ENCODE measurements at regions of chr7 and their contacts with region 1.

Region 1: DNA sequence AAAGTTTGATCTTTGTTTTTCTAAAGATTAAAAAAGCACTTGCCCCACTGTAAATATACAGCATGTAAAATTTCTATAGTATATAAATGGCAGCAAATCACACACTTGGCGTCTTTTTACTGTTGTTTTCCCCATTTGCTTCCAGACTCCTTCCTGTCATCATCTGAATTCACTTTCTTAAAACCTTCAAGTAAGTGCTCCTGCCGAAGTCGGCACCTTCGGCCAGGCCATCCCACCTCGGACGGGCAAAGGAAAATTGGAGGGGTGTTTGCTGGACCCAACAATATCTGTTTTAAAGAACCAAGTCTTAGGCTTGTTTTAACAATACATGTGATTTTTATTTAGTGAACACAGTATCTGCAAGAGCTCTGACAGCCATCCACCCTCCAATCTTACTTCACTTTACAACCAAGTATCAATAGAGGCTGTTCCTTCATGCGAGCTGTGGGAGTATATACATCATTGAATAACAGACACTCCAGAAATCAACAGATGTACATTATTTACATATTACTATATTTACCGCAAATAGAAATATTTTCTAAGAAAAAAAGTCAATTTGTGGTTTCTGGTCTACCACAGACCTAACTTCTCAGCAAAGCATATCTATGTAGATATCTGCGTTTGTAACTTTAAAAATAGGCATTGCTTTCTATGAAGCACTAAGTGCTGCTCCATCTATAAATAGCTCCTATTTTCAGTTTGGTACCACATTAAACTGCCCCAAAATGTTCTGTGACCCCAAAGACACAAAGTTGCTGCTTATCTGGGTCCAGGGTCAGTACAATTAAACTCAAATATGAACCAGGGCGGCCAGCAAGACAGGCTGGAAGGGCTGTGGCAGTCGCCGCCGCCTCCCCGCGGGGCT is 110.7 kb downstream of the CYTH3 start:
- DNase-seq: no peak
- H3K4me3 ChIP-seq: no peak overlapping the region
- H3K27ac ChIP-seq: no peak overlapping the region
- H3K4me1 ChIP-seq: no peaks in the 10 kb centered on the region
- H3K27me3 ChIP-seq: no peaks in the 10 kb centered on the region
- CTCF ChIP-seq: no peak
- POLR2A ChIP-seq: no peak

Region 2: DNA sequence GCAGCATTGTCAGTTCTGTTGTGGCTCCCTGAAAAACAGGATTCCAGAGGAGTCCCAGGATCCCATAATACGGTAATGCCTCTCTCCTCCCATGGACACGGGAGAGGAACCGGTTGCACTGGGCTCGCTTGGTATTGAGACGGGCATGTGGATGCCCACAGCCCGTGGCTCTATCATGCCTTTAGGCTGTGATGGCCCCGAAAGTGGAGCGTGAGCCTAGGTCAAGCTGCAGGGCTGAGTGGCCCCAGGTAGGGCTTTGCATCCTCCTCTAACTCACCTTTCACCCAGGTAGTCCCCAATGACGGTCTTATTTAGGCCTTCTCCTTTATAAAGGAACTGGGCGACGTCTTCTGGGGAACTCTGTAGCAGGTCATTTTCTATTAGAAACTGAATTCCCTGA is 15.8 kb after region 1 on chr7:
- intact Hi-C with region 1: loop called (anchors 1 kb)
- DNase-seq: no peak
- H3K4me3 ChIP-seq: no peak overlapping the region
- H3K27ac ChIP-seq: no peak overlapping the region
- H3K4me1 ChIP-seq: peaks cover 8% of the 10 kb centered on the region
- H3K27me3 ChIP-seq: no peaks in the 10 kb centered on the region
- CTCF ChIP-seq: no peak
- POLR2A ChIP-seq: no peak

Region 3: DNA sequence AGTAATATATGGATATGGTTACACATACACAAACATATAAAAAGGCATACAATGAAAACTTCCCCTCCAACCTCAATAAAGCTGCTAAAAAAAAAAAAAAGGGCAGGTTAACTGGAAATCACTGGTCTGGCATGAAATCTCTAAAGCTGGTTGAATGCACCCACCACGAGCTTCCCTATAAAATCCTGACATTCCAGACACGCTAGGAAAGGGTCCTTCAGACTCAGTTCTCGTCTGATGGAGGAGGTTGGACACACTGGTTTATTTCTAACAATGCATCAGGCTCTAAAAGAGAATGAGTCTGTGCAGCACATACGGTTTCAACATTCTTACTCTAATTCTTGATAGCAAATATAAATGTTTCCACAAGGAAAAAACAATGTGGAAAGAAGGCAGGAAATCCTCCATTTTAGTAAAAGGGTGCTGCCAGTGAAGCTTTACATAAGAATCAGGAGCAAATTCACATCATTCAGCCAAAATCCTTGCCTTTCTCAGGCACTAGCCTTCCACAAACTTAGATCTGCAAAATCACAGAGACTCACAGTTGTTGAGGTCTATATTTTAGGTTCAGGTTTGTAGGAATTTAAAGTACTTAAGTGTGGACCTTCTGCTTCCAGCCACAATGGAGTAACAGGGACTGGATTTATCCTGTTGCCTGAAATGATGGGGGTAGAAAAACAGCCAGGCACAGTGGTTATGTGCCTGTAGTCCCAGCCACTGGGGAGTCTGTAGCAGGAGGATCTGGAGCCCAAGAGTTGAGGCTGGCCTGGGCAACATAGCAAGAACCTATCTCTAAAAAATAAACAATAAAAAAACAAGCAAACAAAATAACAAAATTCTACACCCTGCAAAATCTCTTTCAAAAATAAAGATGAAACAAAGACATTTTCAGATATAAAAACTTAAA is 37.2 kb after region 1 on chr7:
- intact Hi-C with region 1: loop called (anchors 1 kb)
- DNase-seq: no peak
- H3K4me3 ChIP-seq: no peak overlapping the region
- H3K27ac ChIP-seq: no peak overlapping the region
- H3K4me1 ChIP-seq: no peaks in the 10 kb centered on the region
- H3K27me3 ChIP-seq: no peaks in the 10 kb centered on the region
- CTCF ChIP-seq: no peak
- POLR2A ChIP-seq: no peak

Measured in vagina (tissue), 2 donors.